ENCODE measurements at regions of chr1 and their contacts with region 1.

Region 1: DNA sequence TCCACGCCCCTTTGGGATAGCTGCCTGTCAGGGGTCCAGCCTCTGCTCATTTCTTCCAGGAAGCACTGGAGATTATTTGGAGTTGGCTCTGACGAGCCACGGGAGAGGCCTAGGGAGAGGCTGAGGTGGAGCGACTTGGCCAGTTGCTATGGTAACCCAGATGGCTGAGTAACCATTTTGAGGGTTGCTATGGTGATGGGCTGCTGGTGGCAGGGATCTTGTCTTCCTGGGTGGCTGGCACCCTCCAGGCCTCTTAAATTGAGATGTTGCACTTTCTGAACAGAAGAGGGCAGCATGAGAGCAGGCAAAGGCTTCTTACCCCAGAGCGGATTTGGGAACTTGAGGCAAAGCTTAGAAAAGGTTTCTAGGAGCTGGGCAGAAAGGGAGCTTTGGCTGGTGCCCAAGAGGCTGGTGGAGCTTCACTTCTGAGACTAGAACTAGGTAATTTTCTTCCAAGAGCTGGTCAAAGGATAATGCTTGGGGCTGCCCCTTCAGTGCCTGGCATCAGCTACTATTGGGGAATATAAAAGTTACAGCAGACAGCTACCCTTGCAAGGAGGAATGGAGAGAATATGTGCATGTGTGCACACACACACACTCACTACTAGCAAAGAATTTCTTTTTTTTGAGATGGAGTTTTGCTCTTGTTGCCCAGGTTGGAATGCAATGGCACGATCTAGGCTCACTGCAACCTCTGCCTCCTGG is 72.5 kb downstream of the NDUFS5 start:
- DNase-seq: peak in 1 of 2 donors; percentile 52
- ATAC-seq: peak; percentile 64 to 76
- H3K4me3 ChIP-seq: no peak overlapping the region
- H3K27ac ChIP-seq: no peak overlapping the region
- H3K4me1 ChIP-seq: peaks cover 0 to 11% of the 10 kb centered on the region in 2 donors
- H3K27me3 ChIP-seq: no peaks in the 10 kb centered on the region
- CTCF ChIP-seq: peak; percentile 68 to 76 (median 70)
- POLR2A ChIP-seq: no peak

Region 2: DNA sequence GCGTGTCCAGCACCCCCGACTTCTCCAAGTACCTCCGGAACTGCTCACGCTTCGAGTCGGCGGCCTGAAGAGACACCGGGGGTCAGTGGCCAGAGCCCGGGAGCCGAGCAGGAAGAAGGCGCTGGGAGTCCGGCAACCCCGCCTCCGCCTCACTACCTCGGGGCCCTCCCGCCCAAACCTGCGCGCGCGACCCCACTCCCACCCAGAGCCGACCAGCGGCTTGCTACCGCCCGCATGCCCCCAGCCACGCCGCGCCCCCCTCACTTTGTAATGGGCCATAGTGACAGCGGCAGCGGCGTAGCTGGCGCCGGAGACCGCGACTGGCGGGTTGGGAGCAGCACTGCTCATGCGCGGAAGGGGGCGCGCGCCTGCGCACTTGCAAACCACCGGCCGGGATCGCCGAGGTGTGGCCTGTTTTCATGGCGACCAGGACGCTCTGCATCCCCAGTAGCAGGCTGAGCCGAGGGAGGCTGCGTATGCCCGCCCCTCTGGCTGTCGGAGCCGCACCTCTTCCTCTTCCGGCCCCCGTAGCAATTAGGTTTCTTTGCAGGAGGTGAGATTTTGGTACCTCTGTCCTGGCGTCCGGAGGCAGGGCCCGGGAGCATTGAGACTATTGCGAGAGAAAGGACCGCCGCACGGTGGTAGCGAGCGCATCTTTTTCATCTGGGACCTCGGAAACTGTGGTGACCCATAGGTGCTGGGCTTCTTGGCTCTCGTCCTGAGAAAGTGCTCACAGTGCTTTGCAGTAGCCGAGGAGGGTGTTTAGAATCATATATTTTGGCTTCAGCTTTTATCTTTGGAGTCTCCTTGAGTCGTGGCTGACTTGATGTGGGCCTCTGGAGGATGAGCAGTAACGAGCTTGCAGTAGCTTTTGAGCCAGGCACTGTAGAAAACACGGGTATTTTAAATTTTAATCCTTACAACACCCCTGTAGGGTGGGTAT is 225.4 kb before region 1 on chr1 and contains the start of gene MYCBP:
- in situ Hi-C with region 1: loop called in 2 of 4 experiments (anchors 25 kb)
- intact Hi-C with region 1: no loop called
- DNase-seq: peak; percentile 94 to 95
- ATAC-seq: peak; percentile 98
- H3K4me3 ChIP-seq: peak within 1 kb of the TSS; percentile 69 to 95 (median 73)
- H3K27ac ChIP-seq: peak within 1 kb of the TSS; percentile 69 to 86 (median 77)
- H3K4me1 ChIP-seq: peaks cover 24 to 25% of the 10 kb centered on the region in 2 donors
- H3K27me3 ChIP-seq: no peaks in the 10 kb centered on the region
- CTCF ChIP-seq: peak in 2 of 5 experiments; percentile 22 to 24
- POLR2A ChIP-seq: peak; percentile 25 to 37
- total RNA-seq, gene MYCBP: 9.8 to 22.3 (median 13.5) TPM

Region 3: DNA sequence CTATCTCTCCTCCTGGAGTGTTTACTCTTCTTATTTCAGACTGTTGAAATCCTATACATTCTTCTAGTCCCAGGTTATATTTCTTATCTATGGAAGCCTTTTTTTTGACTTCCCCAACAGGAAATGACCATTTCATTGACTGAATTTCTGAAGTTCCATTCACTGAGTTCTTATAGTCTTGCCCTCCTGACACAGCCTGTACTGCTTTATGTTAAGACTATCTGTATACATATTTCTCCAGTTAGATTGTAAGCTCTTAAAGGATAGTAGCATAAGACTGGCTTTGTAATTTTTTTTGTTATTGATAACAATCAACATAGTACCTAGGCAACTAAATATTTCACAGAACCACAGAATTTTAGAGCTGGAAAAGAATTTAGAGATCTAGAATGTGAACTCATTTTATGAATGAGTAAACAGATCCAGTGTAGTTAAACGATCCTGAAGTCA is 90.9 kb after region 1 on chr1:
- in situ Hi-C with region 1: loop called (anchors 5 to 10 kb)
- intact Hi-C with region 1: loop called (anchors 1 kb)
- DNase-seq: no peak
- ATAC-seq: no peak
- H3K4me3 ChIP-seq: no peak overlapping the region
- H3K27ac ChIP-seq: peak overlapping the region in 2 of 4 donors; percentile 18 to 31
- H3K4me1 ChIP-seq: peaks cover 31 to 34% of the 10 kb centered on the region in 2 donors
- H3K27me3 ChIP-seq: no peaks in the 10 kb centered on the region
- CTCF ChIP-seq: no peak
- POLR2A ChIP-seq: no peak

Region 4: GRCh38 chr1:39258146-39258924 is 159.6 kb after region 1 on chr1:
- in situ Hi-C with region 1: loop called (anchors 5 kb)
- intact Hi-C with region 1: loop called (anchors 1 kb)
- DNase-seq: peak; percentile 27 to 68
- ATAC-seq: peak; percentile 69 to 77
- H3K4me3 ChIP-seq: no peak overlapping the region
- H3K27ac ChIP-seq: peak overlapping the region; percentile 29 to 49 (median 34)
- H3K4me1 ChIP-seq: peaks cover 0 to 7% of the 10 kb centered on the region in 2 donors
- H3K27me3 ChIP-seq: no peaks in the 10 kb centered on the region
- CTCF ChIP-seq: peak; percentile 87 to 94 (median 90)
- POLR2A ChIP-seq: no peak

Region 5: GRCh38 chr1:39282537-39283216 is 184.0 kb after region 1 on chr1:
- in situ Hi-C with region 1: no loop called
- intact Hi-C with region 1: no loop called
- DNase-seq: no peak
- ATAC-seq: peak; percentile 78 to 87
- H3K4me3 ChIP-seq: no peak overlapping the region
- H3K27ac ChIP-seq: peak overlapping the region in 2 of 4 donors; percentile 21 to 49
- H3K4me1 ChIP-seq: peaks cover 8 to 12% of the 10 kb centered on the region in 2 donors
- H3K27me3 ChIP-seq: no peaks in the 10 kb centered on the region
- CTCF ChIP-seq: no peak
- POLR2A ChIP-seq: no peak

Region 6: GRCh38 chr1:39538588-39539465 is 440.1 kb after region 1 on chr1:
- in situ Hi-C with region 1: loop called in 2 of 4 experiments (anchors 10 to 25 kb)
- intact Hi-C with region 1: loop called (anchors 2 kb)
- DNase-seq: peak; percentile 48 to 73
- ATAC-seq: peak; percentile 68 to 82
- H3K4me3 ChIP-seq: no peak overlapping the region
- H3K27ac ChIP-seq: peak overlapping the region; percentile 81 to 85 (median 82)
- H3K4me1 ChIP-seq: peaks cover 10 to 19% of the 10 kb centered on the region in 2 donors
- H3K27me3 ChIP-seq: no peaks in the 10 kb centered on the region
- CTCF ChIP-seq: peak; percentile 73 to 88 (median 84)
- POLR2A ChIP-seq: no peak